Lower lobe of right lung (tissue), 2 donors: ENCODE measurements at regions of chr1 and their contacts with region 1.

Region 1: GRCh38 chr1:18902523-18903290 is at the start of gene ALDH4A1:
- DNase-seq: peak; percentile 97
- ATAC-seq: peak; percentile 97 to 98
- H3K4me3 ChIP-seq: peak within 1 kb of the TSS; percentile 89
- H3K27ac ChIP-seq: peak within 1 kb of the TSS; percentile 93
- H3K4me1 ChIP-seq: peaks cover 34% of the 10 kb centered on the region
- H3K27me3 ChIP-seq: no peaks in the 10 kb centered on the region
- CTCF ChIP-seq: no peak
- total RNA-seq, gene ALDH4A1: 11.7 TPM

Region 2: DNA sequence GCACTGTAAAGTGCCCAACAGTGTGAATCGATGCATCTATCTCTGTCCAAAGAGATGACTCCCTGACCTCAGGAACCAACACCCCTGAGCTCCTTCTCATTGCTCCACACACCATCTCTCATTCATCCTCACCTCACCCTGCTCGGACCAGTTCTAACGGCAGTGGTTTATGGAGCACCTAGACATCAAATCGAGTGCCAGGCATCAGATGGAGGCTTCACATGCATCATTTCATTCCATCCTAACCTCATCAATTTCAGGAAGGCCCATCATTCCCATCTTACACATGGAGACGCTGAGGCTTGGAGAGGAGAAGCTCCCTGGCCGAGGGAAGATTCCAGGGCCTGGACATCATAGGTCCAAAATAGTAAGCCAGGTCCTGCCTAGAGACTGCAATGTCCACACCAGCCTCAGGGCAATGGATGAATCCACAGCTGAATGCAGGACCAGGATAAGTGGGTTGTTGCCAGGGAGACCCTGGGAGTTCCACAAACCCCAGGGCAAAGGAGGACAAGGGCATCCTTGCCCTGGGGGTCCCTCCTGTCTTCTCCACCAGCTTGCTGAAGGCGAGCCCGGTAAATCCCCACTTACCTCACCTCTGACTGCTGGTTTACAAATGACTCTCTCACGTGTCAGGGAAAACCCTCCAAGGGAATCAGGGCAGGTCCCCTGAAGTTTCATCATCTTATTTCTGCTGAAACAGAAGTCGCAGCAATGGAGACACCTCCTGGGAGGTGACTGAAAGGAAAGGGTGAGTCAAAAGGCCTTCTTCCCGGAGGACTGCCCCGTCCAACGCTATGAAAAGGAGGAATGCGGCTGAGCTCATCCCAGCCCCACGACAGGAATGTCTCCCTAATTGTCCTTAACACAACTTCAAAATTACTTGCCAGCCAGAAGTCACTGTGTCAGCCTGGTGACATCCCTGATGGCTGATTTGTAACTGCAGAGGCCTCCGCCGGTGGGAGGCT is 62.8 kb after region 1 on chr1:
- intact Hi-C with region 1: loop called (anchors 10 kb)
- DNase-seq: no peak
- ATAC-seq: peak in 1 of 2 donors; percentile 49
- H3K4me3 ChIP-seq: no peak overlapping the region
- H3K27ac ChIP-seq: no peak overlapping the region
- H3K4me1 ChIP-seq: no peaks in the 10 kb centered on the region
- H3K27me3 ChIP-seq: no peaks in the 10 kb centered on the region
- CTCF ChIP-seq: no peak